Endothelial cell of umbilical vein (primary cell): ENCODE measurements at regions of chr1 and their contacts with region 1.

Region 1: GRCh38 chr1:200550367-200550766 is 70.2 kb downstream of the KIF14 start:
- DNase-seq: no peak
- H3K4me3 ChIP-seq: no peak overlapping the region
- H3K27ac ChIP-seq: no peak overlapping the region
- H3K4me1 ChIP-seq: no peaks in the 10 kb centered on the region
- H3K27me3 ChIP-seq: no peaks in the 10 kb centered on the region
- CTCF ChIP-seq: no peak
- POLR2A ChIP-seq: no peak

Region 2: DNA sequence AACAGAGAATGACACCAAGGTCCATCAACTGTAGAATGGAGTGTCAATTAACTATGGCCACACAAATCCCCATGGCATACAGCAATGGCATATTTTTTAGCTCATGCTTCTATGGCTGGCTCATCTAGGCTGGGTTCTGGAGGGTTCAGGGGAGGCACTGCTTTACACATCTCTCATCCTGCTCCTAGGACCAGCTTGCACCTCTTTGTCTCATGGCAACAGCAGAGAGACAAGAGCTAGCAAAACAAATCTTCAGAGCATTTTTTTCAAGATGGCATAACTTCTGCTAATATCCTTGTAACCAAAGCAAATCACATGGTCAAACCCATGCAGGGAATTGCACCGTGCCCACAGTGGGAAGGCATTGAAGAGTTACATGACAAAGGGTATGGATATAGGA is 12.2 kb before region 1 on chr1:
- CTCF ChIA-PET with region 1: interaction called, 12 read pairs
- POLR2A ChIA-PET with region 1: no interaction called
- dilution Hi-C with region 1: no loop called
- intact Hi-C with region 1: no loop called
- DNase-seq: no peak
- H3K4me3 ChIP-seq: no peak overlapping the region
- H3K27ac ChIP-seq: no peak overlapping the region
- H3K4me1 ChIP-seq: no peaks in the 10 kb centered on the region
- H3K27me3 ChIP-seq: no peaks in the 10 kb centered on the region
- CTCF ChIP-seq: no peak
- POLR2A ChIP-seq: no peak

Region 3: GRCh38 chr1:201059871-201060555 is 509.6 kb after region 1 on chr1:
- CTCF ChIA-PET with region 1: no interaction called
- POLR2A ChIA-PET with region 1: no interaction called
- dilution Hi-C with region 1: no loop called
- intact Hi-C with region 1: no loop called
- DNase-seq: no peak
- H3K4me3 ChIP-seq: no peak overlapping the region
- H3K27ac ChIP-seq: no peak overlapping the region
- H3K4me1 ChIP-seq: no peaks in the 10 kb centered on the region
- H3K27me3 ChIP-seq: peaks cover 2 to 4% of the 10 kb centered on the region in 2 experiments
- CTCF ChIP-seq: no peak
- POLR2A ChIP-seq: no peak